Activated T-helper 1 cell treated with anti-CD3 and anti-CD28 coated beads, Interleukin-12 subunit alpha, Interleukin-12 subunit beta, Interleukin-2, Interleukin-4 antibody, amounts not matched to agents 30 ng/mL and 10 ng/mL and 1 ng/mL, durations not matched to agents 14 hours and 24 hours and 36 hours (primary cell): ENCODE measurements at regions of chr6 and their contacts with region 1.

Region 1: GRCh38 chr6:16319813-16320532 is 81.6 kb downstream of the GMPR start:
- DNase-seq: peak; percentile 65
- H3K4me3 Mint-ChIP-seq: peak overlapping the region; percentile 56
- H3K27ac Mint-ChIP-seq: peak overlapping the region; percentile 81
- H3K4me1 Mint-ChIP-seq: peaks cover 76% of the 10 kb centered on the region
- H3K27me3 Mint-ChIP-seq: no peaks in the 10 kb centered on the region

Region 2: DNA sequence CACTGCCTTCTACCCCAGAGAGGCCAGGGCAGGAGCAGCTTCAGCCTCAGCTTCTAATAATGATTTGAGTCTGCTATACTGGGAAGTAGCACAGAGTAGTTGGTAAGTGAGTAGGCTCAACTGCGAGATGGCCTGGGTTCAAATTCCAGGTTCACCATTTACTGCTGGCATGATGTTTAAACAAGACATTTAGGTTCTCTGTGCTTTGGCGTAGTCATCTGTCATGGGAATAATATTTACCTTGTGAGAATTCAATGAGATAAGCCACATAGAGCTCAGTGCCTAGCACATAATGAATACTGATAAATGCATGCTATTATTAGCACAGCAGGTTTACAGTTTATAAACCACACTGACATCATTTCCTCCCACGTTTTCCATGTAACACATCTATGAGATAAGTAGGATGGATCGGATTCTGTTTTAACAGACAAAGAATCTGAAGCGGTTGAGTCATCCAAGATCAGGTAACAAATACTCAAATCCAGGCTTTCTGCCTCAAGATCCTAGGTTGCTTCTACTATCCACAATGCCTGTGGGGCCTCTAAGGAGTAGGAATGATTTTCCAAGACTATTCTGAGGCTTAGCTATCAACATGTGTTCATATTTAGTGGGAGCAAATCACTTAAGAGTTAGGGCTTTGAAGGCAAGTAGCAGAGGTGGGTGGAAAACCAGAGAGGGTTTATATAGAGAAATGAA is 584.3 kb before region 1 on chr6:
- intact Hi-C with region 1: no loop called
- DNase-seq: no peak
- H3K4me3 Mint-ChIP-seq: peak overlapping the region; percentile 6
- H3K27ac Mint-ChIP-seq: peak overlapping the region; percentile 78
- H3K4me1 Mint-ChIP-seq: peaks cover 38% of the 10 kb centered on the region
- H3K27me3 Mint-ChIP-seq: peaks cover 2% of the 10 kb centered on the region

Region 3: GRCh38 chr6:15776458-15776980 is 543.5 kb before region 1 on chr6:
- intact Hi-C with region 1: loop called (anchors 5 kb)
- DNase-seq: peak; percentile 21
- H3K4me3 Mint-ChIP-seq: no peak overlapping the region
- H3K27ac Mint-ChIP-seq: peak overlapping the region; percentile 78
- H3K4me1 Mint-ChIP-seq: peaks cover 46% of the 10 kb centered on the region
- H3K27me3 Mint-ChIP-seq: no peaks in the 10 kb centered on the region

Region 4: GRCh38 chr6:16420715-16421461 is 100.9 kb after region 1 on chr6:
- intact Hi-C with region 1: loop called (anchors 1 kb)
- DNase-seq: peak; percentile 47
- H3K4me3 Mint-ChIP-seq: peak overlapping the region; percentile 73
- H3K27ac Mint-ChIP-seq: peak overlapping the region; percentile 95
- H3K4me1 Mint-ChIP-seq: peaks cover 63% of the 10 kb centered on the region
- H3K27me3 Mint-ChIP-seq: no peaks in the 10 kb centered on the region

Region 5: DNA sequence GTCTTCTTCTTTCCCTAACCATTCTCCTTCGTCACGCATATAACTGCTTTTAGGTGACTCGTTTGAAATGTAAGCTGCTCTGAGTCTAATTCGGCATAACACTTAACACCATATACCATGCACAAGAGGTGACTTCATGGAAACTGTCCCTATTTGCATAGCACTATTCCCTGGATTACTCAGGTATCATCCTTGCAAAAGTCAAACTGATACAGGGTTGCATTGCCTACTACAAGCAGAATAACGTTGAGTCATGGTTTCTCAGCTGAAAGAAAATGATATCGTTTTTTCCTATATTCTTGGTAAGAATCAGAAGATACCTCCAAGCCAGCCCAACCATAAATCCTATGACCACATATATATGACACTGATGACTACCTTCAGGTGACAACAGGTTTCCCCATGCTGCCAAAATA is 213.8 kb after region 1 on chr6:
- intact Hi-C with region 1: loop called (anchors 1 kb)
- DNase-seq: no peak
- H3K4me3 Mint-ChIP-seq: no peak overlapping the region
- H3K27ac Mint-ChIP-seq: peak overlapping the region; percentile 83
- H3K4me1 Mint-ChIP-seq: peaks cover 45% of the 10 kb centered on the region
- H3K27me3 Mint-ChIP-seq: no peaks in the 10 kb centered on the region

Region 6: GRCh38 chr6:16836144-16836981 is 516.4 kb after region 1 on chr6:
- intact Hi-C with region 1: loop called (anchors 5 kb)
- DNase-seq: no peak
- H3K4me3 Mint-ChIP-seq: peak overlapping the region; percentile 59
- H3K27ac Mint-ChIP-seq: peak overlapping the region; percentile 73
- H3K4me1 Mint-ChIP-seq: peaks cover 25% of the 10 kb centered on the region
- H3K27me3 Mint-ChIP-seq: peaks cover 8% of the 10 kb centered on the region